HEK293T (cell line): ENCODE measurements at regions of chr18 and their contacts with region 1.

Region 1: DNA sequence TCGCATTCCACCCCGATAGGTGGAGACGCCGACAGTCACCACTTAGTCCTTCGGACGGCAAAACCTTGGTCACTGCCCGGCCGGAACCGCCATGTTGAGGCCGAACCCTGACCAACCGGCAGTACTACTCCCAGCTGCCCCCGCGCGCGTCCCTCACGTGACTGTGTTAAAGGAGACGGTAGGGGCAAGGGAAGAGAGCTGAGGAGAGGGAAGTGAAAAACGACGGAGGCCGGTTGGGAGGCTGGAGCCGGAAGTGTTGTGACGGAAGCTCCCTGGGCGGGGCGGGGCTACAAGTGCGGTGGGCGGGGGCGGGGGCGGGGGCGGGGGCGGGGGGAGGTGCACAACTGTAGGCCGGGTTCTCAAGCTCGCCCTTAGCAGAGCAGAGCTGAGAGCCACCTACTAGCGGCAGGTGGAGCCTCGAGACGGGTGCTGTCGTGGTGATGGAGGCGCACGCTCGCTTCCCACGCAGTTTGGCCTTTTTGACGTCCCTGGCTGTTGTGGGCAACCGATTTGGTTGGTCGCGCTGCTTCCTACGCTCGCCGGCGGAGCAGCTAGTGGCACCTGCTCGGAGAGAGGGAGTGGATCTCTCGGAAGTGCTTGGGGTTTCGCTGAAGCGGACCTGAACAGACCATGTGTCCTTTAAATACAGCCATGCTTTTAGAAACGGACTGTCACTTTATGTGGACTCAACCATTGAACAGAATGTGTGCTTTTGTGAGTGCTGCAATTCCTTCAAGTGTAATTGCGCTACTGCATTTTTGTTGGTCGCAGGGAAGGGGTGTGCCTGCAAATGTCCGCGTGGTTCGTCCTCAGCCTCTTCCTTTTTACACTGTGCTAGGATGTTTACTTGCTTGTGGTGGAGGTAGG is at the start of gene TRAPPC8:
- DNase-seq: peak; percentile 100

Region 2: DNA sequence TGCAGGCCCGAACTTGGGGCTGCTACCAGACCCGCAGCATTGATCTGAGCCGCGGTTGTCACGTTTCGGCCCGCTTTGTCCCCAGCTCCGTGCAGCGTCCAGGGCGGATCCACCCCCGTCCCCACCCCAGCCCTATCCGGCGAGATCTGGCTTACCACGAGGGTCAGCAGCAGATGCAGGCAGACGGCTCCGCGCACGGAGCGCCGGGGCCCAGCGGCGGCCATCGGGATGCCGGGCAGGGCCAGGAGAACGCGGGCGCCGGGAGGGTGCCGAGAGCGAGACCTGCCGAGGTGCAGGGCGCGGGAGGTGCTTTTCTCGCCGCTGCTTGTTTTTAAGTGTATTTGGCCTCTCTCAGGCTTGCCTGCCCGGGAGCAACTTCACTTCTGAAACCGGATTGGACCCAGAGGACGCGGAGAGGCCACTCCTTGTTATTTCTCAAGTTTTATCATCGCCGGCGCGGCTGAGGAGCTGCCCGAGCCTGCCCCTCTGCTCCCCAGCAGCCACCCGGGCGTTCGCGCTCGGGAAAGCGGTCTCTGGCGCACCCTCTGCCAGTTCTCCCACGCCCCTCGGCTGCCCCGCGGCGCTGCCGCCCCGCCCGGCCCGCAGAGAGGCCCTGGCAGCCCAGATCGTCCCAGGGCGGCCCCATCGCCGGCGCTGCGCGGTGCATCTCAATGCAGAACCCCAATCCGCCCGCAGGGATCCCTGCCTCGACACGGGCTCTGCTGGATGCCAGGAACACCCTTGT is 900.6 kb before region 1 on chr18 and contains the start of gene DSC3:
- CTCF ChIA-PET with region 1: no interaction called
- POLR2A ChIA-PET with region 1: interaction called, 10 read pairs
- DNase-seq: peak; percentile 72

Region 3: GRCh38 chr18:31931163-31931885 is 11.9 kb before region 1 on chr18:
- CTCF ChIA-PET with region 1: interaction called, 4 read pairs
- POLR2A ChIA-PET with region 1: interaction called, 17 read pairs
- DNase-seq: peak; percentile 54

Region 4: GRCh38 chr18:32018331-32019250 is 75.4 kb after region 1 on chr18 and contains the start of gene RNF125:
- CTCF ChIA-PET with region 1: interaction called, 3 read pairs
- POLR2A ChIA-PET with region 1: interaction called, 45 read pairs
- DNase-seq: peak; percentile 96

Region 5: DNA sequence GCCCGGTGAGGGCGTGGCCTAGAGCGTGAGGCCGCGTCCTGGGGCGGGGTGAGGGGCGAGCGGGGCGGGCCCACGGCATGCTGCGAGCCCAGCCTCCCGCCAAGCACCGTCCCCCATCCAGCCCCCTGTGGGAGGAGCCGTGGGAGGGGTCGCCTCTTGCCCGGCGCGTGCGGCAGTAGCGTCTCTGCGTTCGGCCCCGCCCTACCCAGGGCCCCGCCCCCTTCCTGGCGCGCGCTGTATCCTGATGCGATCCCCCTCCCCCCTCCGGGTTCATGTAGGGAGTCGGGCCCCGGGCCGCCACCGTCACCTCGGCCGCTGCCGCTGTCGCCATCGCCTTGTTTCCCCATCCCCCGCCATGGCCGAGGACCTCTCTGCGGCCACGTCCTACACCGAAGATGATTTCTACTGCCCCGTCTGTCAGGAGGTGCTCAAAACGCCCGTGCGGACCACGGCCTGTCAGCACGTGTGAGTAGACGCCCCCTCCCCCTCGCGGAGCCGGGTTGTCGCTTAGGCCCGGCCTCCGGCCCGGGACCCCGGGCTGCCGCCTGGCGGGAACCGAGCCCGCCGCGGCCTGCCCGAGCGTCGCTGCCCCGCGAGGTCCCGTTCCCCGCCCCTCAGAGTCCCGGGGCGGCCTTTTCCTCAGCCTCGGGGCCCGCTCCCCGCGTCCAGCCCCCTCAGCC is 149.3 kb after region 1 on chr18:
- CTCF ChIA-PET with region 1: no interaction called
- POLR2A ChIA-PET with region 1: interaction called, 29 read pairs
- DNase-seq: peak; percentile 100

Region 6: DNA sequence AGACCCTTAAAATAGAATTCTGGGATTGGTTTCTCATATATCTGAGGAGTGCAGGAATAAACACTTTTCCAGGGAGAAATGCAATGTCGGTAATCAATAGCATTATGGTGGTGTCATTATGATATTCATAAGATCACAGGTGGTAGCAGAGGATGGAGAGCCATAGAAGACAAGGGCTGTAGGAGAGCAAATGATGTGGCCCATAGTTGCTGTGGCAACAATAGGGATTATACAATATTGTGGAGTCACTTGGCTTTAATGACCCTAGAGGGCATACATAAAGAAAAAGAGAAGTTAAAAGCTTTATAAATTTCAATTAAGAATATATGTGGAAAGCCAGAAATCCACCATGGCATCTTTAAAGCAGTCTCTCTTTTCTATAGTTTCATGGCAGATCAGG is 550.9 kb after region 1 on chr18:
- CTCF ChIA-PET with region 1: no interaction called
- POLR2A ChIA-PET with region 1: no interaction called
- DNase-seq: no peak